ENCODE measurements at regions of chr10 and their contacts with region 1.

Region 1: DNA sequence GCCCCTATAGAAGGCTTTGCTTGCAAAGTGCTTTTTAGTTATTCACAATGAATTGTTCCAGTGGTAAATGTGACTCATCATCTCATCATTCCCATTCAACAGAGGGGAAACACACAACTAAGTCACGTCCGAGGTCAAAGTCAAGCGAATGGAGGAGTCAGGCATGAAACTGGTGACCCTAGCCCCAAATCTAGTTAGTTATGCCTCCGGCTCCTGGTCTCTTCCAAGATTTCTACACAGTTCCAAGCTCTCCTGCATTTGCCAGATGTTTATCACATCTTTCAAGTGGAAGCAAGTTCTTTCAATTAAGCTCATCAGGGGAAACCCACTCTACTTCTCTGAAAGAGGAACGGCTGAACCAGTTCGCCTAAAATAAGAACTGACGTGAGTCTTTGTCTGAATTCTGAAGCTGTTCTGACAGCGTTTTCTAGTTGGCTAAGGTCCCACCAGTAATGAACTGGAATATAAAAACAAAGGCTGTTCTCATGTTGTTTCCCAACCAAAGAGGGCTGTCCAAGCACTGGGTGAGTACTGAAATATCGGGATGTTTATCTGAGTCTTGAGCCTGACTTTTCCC is 140.9 kb upstream of the NRBF2 start:
- DNase-seq: peak; percentile 28
- ATAC-seq: peak; percentile 19
- H3K4me3 Mint-ChIP-seq: peak overlapping the region; percentile 26
- H3K27ac Mint-ChIP-seq: peak overlapping the region; percentile 82
- H3K4me1 Mint-ChIP-seq: peaks cover 63% of the 10 kb centered on the region
- H3K27me3 Mint-ChIP-seq: peaks cover 3% of the 10 kb centered on the region

Region 2: DNA sequence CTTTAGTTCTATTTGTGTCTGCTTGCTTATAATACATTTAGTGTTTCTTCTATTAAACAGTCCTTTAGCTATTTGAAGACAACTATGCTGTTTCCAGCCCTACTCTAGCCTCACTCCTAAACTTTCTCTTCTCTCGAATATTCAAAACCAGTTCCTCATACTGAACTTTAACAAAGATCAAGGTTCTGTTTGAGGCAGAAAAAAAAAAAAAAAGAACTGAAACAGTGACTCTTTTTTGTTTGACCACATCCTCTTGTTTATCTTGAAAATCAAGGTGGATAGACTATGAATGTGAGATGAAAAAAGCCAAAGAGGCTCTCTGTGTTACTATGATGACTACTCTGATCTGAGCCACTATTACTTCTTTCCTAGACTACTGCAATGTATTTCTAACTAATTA is 463.8 kb before region 1 on chr10:
- CTCF ChIA-PET with region 1: no interaction called
- POLR2A ChIA-PET with region 1: no interaction called
- intact Hi-C with region 1: loop called in 1 of 2 experiments (anchors 1 kb)
- DNase-seq: no peak
- ATAC-seq: peak; percentile 99
- H3K4me3 Mint-ChIP-seq: no peak overlapping the region
- H3K27ac Mint-ChIP-seq: peak overlapping the region; percentile 68
- H3K4me1 Mint-ChIP-seq: peaks cover 37% of the 10 kb centered on the region
- H3K27me3 Mint-ChIP-seq: peaks cover 2% of the 10 kb centered on the region

Region 3: GRCh38 chr10:62637249-62638061 is 354.8 kb before region 1 on chr10:
- CTCF ChIA-PET with region 1: interaction called, 6 read pairs
- POLR2A ChIA-PET with region 1: no interaction called
- intact Hi-C with region 1: loop called in 1 of 2 experiments (anchors 1 kb)
- DNase-seq: peak; percentile 82
- ATAC-seq: peak; percentile 95
- H3K4me3 Mint-ChIP-seq: no peak overlapping the region
- H3K27ac Mint-ChIP-seq: no peak overlapping the region
- H3K4me1 Mint-ChIP-seq: peaks cover 21% of the 10 kb centered on the region
- H3K27me3 Mint-ChIP-seq: no peaks in the 10 kb centered on the region

Region 4: GRCh38 chr10:62732841-62733653 is 259.2 kb before region 1 on chr10:
- CTCF ChIA-PET with region 1: no interaction called
- POLR2A ChIA-PET with region 1: interaction called, 4 read pairs
- intact Hi-C with region 1: loop called (anchors 1 to 5 kb)
- DNase-seq: peak; percentile 79
- ATAC-seq: peak; percentile 87
- H3K4me3 Mint-ChIP-seq: peak overlapping the region; percentile 3
- H3K27ac Mint-ChIP-seq: no peak overlapping the region
- H3K4me1 Mint-ChIP-seq: peaks cover 25% of the 10 kb centered on the region
- H3K27me3 Mint-ChIP-seq: peaks cover 5% of the 10 kb centered on the region

Region 5: DNA sequence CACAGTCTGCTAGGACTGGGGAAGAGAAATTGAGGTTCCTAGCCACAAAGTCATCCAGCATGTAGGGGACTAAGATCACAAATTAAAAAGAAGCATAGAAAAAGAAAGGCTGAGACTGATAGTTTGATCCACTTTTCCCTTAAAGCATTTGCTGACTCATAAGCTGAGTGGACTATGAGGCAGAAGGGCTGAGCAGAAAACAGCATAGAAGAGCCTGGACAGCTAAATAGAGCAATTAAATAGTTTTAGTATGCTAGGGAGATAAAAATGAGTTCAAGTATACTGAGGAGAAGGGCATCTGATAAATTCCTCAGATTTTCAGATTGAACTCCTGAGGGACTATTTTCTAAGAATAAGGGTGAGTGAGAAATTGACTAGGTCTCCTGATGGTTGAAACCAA is 20.1 kb before region 1 on chr10:
- CTCF ChIA-PET with region 1: no interaction called
- POLR2A ChIA-PET with region 1: no interaction called
- intact Hi-C with region 1: no loop called
- DNase-seq: no peak
- ATAC-seq: no peak
- H3K4me3 Mint-ChIP-seq: no peak overlapping the region
- H3K27ac Mint-ChIP-seq: no peak overlapping the region
- H3K4me1 Mint-ChIP-seq: peaks cover 6% of the 10 kb centered on the region
- H3K27me3 Mint-ChIP-seq: peaks cover 27% of the 10 kb centered on the region

Region 6: GRCh38 chr10:63003816-63004453 is 11.7 kb after region 1 on chr10:
- CTCF ChIA-PET with region 1: interaction called, 12 read pairs
- POLR2A ChIA-PET with region 1: no interaction called
- intact Hi-C with region 1: no loop called
- DNase-seq: no peak
- ATAC-seq: peak; percentile 39
- H3K4me3 Mint-ChIP-seq: no peak overlapping the region
- H3K27ac Mint-ChIP-seq: no peak overlapping the region
- H3K4me1 Mint-ChIP-seq: peaks cover 13% of the 10 kb centered on the region
- H3K27me3 Mint-ChIP-seq: peaks cover 26% of the 10 kb centered on the region

Region 7: DNA sequence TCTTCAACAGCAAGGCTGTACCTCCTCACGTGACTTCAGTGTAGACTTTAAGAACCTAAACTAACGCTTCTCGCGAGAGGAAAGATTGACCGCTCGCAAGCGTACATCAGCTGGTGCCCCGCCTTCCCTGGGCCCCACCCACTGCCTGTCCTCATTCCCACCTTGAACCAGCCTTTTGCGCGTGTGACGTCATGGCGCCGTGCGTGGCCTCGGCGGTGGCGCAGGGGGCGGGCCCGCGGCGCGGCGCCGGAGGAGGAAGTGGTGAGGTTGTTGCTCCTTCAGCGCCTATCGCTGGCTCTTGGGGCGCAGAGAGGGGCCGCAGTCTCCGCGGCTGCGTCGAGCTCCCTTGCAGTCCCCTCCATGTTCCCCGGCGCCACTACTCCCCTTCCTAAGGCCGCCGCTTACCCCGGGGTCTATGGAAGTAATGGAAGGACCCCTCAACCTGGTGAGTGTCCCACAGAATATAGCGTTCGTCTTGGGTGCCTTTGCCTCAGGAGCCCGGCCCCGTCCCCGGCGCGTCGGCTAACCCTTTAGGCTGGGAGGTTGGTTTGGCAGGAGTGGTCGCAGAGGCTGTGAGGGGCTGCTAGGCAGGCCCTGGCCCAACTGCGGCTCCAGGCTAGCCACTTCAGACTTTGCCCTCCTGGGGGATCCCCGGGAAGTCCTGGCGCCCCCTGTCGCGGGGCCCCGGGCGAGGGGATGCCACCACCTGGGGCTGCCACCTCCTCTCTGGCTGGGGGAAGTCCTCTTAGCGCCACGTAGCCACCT is 141.0 kb after region 1 on chr10 and contains the start of gene NRBF2:
- CTCF ChIA-PET with region 1: no interaction called
- POLR2A ChIA-PET with region 1: interaction called, 3 read pairs
- intact Hi-C with region 1: loop called in 1 of 2 experiments (anchors 1 kb)
- DNase-seq: peak; percentile 99
- ATAC-seq: peak; percentile 90
- H3K4me3 Mint-ChIP-seq: peak within 1 kb of the TSS; percentile 81
- H3K27ac Mint-ChIP-seq: peak within 1 kb of the TSS; percentile 92
- H3K4me1 Mint-ChIP-seq: peaks cover 46% of the 10 kb centered on the region
- H3K27me3 Mint-ChIP-seq: no peaks in the 10 kb centered on the region
- total RNA-seq, gene NRBF2: 23.9 to 24.1 TPM

Region 8: DNA sequence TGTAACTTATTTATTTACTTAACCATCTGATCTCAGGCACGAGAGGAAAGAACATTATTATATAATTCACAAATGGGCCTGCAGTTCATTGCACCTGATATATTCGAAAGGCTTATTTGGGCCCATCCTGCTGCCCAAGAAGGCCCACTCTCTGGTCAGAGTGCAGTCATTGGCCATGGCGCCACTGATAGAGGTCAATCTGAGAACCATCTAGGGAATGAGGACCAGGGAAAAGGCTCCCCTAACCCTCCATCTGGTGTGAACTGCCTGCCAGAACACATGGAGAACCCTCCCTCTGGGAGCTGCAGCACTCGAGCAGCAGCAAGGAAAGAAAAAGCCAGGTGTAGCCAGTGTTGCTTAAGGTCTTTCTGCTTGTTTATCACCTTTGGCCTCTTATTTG is 665.5 kb after region 1 on chr10:
- CTCF ChIA-PET with region 1: no interaction called
- POLR2A ChIA-PET with region 1: no interaction called
- intact Hi-C with region 1: no loop called
- DNase-seq: no peak
- ATAC-seq: no peak
- H3K4me3 Mint-ChIP-seq: no peak overlapping the region
- H3K27ac Mint-ChIP-seq: no peak overlapping the region
- H3K4me1 Mint-ChIP-seq: no peaks in the 10 kb centered on the region
- H3K27me3 Mint-ChIP-seq: no peaks in the 10 kb centered on the region

Measured in activated CD4-positive, alpha-beta T cell treated with anti-CD3 and anti-CD28 coated beads for 36 hours (primary cell).